ENCODE measurements at regions of chr4 and their contacts with region 1.

Region 1: DNA sequence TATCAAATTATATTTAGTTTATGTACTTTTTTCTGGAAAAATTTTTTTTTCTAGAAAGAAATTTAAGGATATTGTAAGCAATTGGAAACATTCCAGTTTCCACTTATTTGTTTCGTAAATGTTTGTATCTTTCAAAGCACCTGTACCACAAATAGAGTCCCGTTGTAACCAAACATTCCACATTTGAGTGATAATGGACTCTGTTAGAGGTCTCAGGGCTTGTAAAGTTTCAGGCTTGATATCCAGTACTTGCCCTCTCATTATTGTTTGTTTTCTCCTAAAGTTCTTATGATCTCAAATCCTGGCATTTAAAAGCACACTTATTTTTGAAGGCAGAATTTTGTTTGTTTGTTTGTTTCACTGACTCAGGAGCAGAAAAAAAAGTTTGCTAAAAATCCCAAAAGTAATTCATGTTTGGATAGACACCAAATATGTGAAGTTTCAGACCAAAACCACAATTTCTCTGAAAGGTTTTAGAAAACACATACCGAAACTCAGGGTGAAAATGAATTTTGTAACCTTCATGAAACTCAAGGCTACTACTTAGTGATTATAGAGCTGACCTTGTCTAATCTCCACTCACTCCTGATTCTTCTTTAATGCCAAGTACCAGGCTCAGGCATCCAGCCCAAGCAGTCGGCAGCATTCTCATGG is 5.7 kb upstream of the TMEM192 start:
- DNase-seq: no peak

Region 2: GRCh38 chr4:165136529-165136928 is 18.1 kb after region 1 on chr4:
- intact Hi-C with region 1: loop called in 1 of 2 experiments (anchors 2 kb)
- DNase-seq: no peak

Measured in posterior vena cava (tissue), 2 donors.